GM12878 (cell line): ENCODE measurements at regions of chr9 and their contacts with region 1.

Region 1: GRCh38 chr9:4762108-4762885 is 21.3 kb upstream of the AK3 start:
- DNase-seq: peak; percentile 81
- ATAC-seq: peak; percentile 92
- H3K4me3 ChIP-seq: peak overlapping the region; percentile 56
- H3K27ac ChIP-seq: peak overlapping the region; percentile 60
- H3K4me1 ChIP-seq: peaks cover 18% of the 10 kb centered on the region
- H3K27me3 ChIP-seq: no peaks in the 10 kb centered on the region
- CTCF ChIP-seq: peak; percentile 71 to 84 (median 84); a peak in 5 of 6 replicates
- EP300 ChIP-seq: peak in 1 of 2 experiments; percentile 41; a peak in 1 of 4 replicates
- POLR2A ChIP-seq: no peak
- RAD21 ChIP-seq: peak; percentile 96

Region 2: GRCh38 chr9:4689021-4689420 is 73.3 kb before region 1 on chr9:
- CTCF ChIA-PET with region 1: no interaction called
- POLR2A ChIA-PET with region 1: no interaction called
- RAD21 ChIA-PET with region 1: no interaction called
- SMC1A ChIA-PET with region 1: no interaction called
- in situ Hi-C with region 1: no loop called
- intact Hi-C with region 1: no loop called
- DNase-seq: no peak
- ATAC-seq: no peak
- H3K4me3 ChIP-seq: no peak overlapping the region
- H3K27ac ChIP-seq: peak overlapping the region; percentile 16; the same call in 1 of the 2 replicates
- H3K4me1 ChIP-seq: peaks cover 12% of the 10 kb centered on the region
- H3K27me3 ChIP-seq: no peaks in the 10 kb centered on the region
- CTCF ChIP-seq: no peak
- EP300 ChIP-seq: no peak
- POLR2A ChIP-seq: no peak
- RAD21 ChIP-seq: no peak

Region 3: DNA sequence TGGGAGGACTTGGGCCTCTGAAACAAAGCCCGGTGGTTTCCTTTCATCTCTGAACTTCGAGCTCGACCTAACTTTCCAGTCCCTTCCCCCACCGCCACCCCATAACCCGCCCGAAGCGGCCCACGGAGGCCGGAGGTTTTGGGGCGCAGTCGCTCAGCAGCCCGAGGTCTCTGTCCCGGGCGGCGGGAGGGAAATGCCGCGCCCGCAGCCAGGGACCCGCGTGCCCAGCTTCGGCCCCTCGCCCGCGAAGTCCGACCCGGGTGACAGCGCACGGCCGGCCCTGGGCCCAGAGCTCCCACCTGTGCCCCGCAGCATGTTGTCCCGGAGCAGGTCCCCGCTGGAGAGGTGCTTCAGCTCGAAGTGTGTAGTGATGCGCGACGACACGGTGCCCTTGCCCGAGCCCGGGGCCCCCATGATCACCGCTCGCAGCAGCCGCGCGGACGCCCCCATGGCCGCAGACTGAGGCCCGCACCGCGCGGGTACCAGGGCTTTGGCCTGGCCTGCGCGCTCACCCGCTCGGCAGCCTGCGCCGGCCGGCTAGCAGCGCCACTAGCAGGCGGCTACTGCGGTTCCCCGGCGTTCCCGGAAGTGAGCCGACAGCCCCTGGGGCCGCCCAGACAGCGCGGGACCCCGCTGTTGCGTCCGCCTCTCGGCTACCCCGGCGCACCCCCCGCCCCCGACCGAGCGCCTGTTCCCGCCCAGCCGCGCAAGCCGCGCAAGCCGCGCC is 21.5 kb before region 1 on chr9 and contains the start of gene AK3:
- CTCF ChIA-PET with region 1: interaction called, 11 read pairs
- POLR2A ChIA-PET with region 1: no interaction called
- RAD21 ChIA-PET with region 1: interaction called, 3 read pairs
- SMC1A ChIA-PET with region 1: interaction called, 5 read pairs
- in situ Hi-C with region 1: no loop called
- intact Hi-C with region 1: no loop called
- DNase-seq: no peak
- ATAC-seq: peak; percentile 94
- H3K4me3 ChIP-seq: peak within 1 kb of the TSS; percentile 92
- H3K27ac ChIP-seq: peak within 1 kb of the TSS; percentile 80
- H3K4me1 ChIP-seq: peaks cover 8% of the 10 kb centered on the region
- H3K27me3 ChIP-seq: no peaks in the 10 kb centered on the region
- CTCF ChIP-seq: peak in 2 of 3 experiments; percentile 9 to 54; a peak in 3 of 6 replicates
- EP300 ChIP-seq: no peak
- POLR2A ChIP-seq: peak; percentile 92
- RAD21 ChIP-seq: peak; percentile 34; the same call in 1 of the 2 replicates
- polyA plus RNA-seq, gene AK3: 14.2 to 26.2 TPM

Region 4: DNA sequence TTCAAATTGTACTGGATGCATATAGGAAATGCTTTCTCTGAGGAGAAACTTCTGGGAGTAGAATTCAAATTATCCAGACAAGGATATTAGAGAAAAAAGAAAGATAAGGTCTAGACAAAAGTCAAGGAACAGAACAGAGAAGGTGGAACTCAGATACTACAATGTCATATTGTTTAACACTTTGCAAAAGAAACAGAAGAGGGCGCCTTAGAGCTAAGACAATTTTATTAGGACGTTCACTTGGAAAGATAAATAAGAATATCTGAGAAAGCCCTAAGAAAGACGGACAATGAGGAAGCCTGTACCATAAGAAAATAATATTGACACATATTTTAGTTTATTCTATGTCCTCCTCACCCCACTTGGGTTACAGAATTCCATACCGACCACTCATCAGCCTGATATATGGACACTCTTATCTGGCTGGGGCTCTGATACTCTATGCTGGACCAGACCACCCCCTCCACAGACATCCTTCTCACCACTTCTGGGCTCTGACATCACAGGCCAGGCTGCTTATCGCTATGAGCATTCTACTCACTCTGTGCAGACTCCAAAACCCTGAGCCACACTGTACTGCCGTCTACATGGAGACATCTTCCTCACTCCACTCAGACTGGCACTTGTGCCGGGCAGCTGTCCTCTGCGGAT is 12.1 kb before region 1 on chr9:
- CTCF ChIA-PET with region 1: interaction called, 53 read pairs
- POLR2A ChIA-PET with region 1: no interaction called
- RAD21 ChIA-PET with region 1: interaction called, 5 read pairs
- SMC1A ChIA-PET with region 1: interaction called, 6 read pairs
- in situ Hi-C with region 1: no loop called
- intact Hi-C with region 1: no loop called
- DNase-seq: no peak
- ATAC-seq: peak; percentile 86
- H3K4me3 ChIP-seq: no peak overlapping the region
- H3K27ac ChIP-seq: no peak overlapping the region
- H3K4me1 ChIP-seq: peaks cover 4% of the 10 kb centered on the region; the same call in 1 of the 2 replicates
- H3K27me3 ChIP-seq: no peaks in the 10 kb centered on the region
- CTCF ChIP-seq: peak; percentile 54 to 59 (median 58); a peak in 5 of 6 replicates
- EP300 ChIP-seq: no peak
- POLR2A ChIP-seq: no peak
- RAD21 ChIP-seq: peak; percentile 72

Region 5: GRCh38 chr9:4792572-4793458 is 30.5 kb after region 1 on chr9 and contains the start of gene RCL1:
- CTCF ChIA-PET with region 1: interaction called, 18 read pairs
- POLR2A ChIA-PET with region 1: interaction called, 3 read pairs
- RAD21 ChIA-PET with region 1: interaction called, 10 read pairs
- SMC1A ChIA-PET with region 1: interaction called, 21 read pairs
- in situ Hi-C with region 1: no loop called
- intact Hi-C with region 1: loop called (anchors 2 kb)
- DNase-seq: peak; percentile 83
- ATAC-seq: peak; percentile 97
- H3K4me3 ChIP-seq: peak within 1 kb of the TSS; percentile 82
- H3K27ac ChIP-seq: peak within 1 kb of the TSS; percentile 82
- H3K4me1 ChIP-seq: peaks cover 7% of the 10 kb centered on the region
- H3K27me3 ChIP-seq: no peaks in the 10 kb centered on the region
- CTCF ChIP-seq: no peak
- EP300 ChIP-seq: no peak
- POLR2A ChIP-seq: peak; percentile 97
- RAD21 ChIP-seq: peak; percentile 6; the same call in 1 of the 2 replicates
- polyA plus RNA-seq, gene RCL1: 21.1 to 28.6 TPM

Region 6: GRCh38 chr9:4832786-4833579 is 70.7 kb after region 1 on chr9:
- CTCF ChIA-PET with region 1: interaction called, 7 read pairs
- POLR2A ChIA-PET with region 1: no interaction called
- RAD21 ChIA-PET with region 1: interaction called, 5 read pairs
- SMC1A ChIA-PET with region 1: interaction called, 5 read pairs
- in situ Hi-C with region 1: no loop called
- intact Hi-C with region 1: loop called (anchors 5 kb)
- DNase-seq: no peak
- ATAC-seq: no peak
- H3K4me3 ChIP-seq: no peak overlapping the region
- H3K27ac ChIP-seq: no peak overlapping the region
- H3K4me1 ChIP-seq: no peaks in the 10 kb centered on the region
- H3K27me3 ChIP-seq: no peaks in the 10 kb centered on the region
- CTCF ChIP-seq: no peak
- EP300 ChIP-seq: no peak
- POLR2A ChIP-seq: no peak
- RAD21 ChIP-seq: no peak

Region 7: DNA sequence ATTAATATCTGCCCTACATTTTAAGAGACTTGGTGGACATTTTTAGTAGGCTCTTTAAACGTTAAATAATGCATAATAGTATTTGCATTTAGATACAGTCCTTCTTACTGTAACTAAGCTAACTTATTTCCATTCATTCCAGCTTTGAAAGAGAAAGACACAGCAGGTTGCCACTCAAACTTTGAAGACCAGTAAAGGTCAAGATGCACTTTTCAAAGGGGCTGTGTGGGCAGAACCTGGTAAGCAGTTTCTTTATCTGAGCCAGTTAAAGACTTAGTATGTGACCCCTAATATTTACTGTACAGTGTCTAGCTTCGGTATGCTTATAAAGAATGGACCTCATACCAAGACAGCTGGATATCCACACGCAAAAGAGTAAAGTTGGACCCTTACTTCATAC is 654.7 kb after region 1 on chr9:
- CTCF ChIA-PET with region 1: interaction called, 11 read pairs
- POLR2A ChIA-PET with region 1: no interaction called
- RAD21 ChIA-PET with region 1: interaction called, 3 read pairs
- SMC1A ChIA-PET with region 1: interaction called, 3 read pairs
- in situ Hi-C with region 1: no loop called
- intact Hi-C with region 1: no loop called
- DNase-seq: no peak
- ATAC-seq: no peak
- H3K4me3 ChIP-seq: no peak overlapping the region
- H3K27ac ChIP-seq: no peak overlapping the region
- H3K4me1 ChIP-seq: no peaks in the 10 kb centered on the region
- H3K27me3 ChIP-seq: no peaks in the 10 kb centered on the region
- CTCF ChIP-seq: no peak
- EP300 ChIP-seq: no peak
- POLR2A ChIP-seq: no peak
- RAD21 ChIP-seq: no peak

Region 8: GRCh38 chr9:5425006-5425628 is 662.8 kb after region 1 on chr9:
- CTCF ChIA-PET with region 1: interaction called, 23 read pairs
- POLR2A ChIA-PET with region 1: no interaction called
- RAD21 ChIA-PET with region 1: interaction called, 8 read pairs
- SMC1A ChIA-PET with region 1: interaction called, 12 read pairs
- in situ Hi-C with region 1: no loop called
- intact Hi-C with region 1: loop called (anchors 5 kb)
- DNase-seq: peak; percentile 30
- ATAC-seq: peak; percentile 77
- H3K4me3 ChIP-seq: no peak overlapping the region
- H3K27ac ChIP-seq: no peak overlapping the region
- H3K4me1 ChIP-seq: no peaks in the 10 kb centered on the region
- H3K27me3 ChIP-seq: no peaks in the 10 kb centered on the region
- CTCF ChIP-seq: peak; percentile 45 to 61 (median 56); a peak in 5 of 6 replicates
- EP300 ChIP-seq: no peak
- POLR2A ChIP-seq: no peak
- RAD21 ChIP-seq: peak; percentile 78